Endothelial cell of umbilical vein (primary cell): ENCODE measurements at regions of chr10 and their contacts with region 1.

Region 1: GRCh38 chr10:124106241-124106879 is 13.0 kb upstream of the CHST15 start:
- DNase-seq: peak; percentile 97
- H3K4me3 ChIP-seq: no peak overlapping the region
- H3K27ac ChIP-seq: peak overlapping the region; percentile 38
- H3K4me1 ChIP-seq: peaks cover 15% of the 10 kb centered on the region
- H3K27me3 ChIP-seq: no peaks in the 10 kb centered on the region
- CTCF ChIP-seq: no peak
- POLR2A ChIP-seq: no peak

Region 2: GRCh38 chr10:124092860-124093773 is 13.2 kb before region 1 on chr10 and contains the start of gene CHST15:
- CTCF ChIA-PET with region 1: interaction called, 5 read pairs
- POLR2A ChIA-PET with region 1: no interaction called
- dilution Hi-C with region 1: no loop called
- intact Hi-C with region 1: loop called (anchors 1 kb)
- DNase-seq: peak; percentile 63
- H3K4me3 ChIP-seq: peak within 1 kb of the TSS; percentile 21 to 75 (median 25)
- H3K27ac ChIP-seq: no peak within 1 kb of the TSS
- H3K4me1 ChIP-seq: peaks cover 6% of the 10 kb centered on the region
- H3K27me3 ChIP-seq: peaks cover 4 to 47% of the 10 kb centered on the region in 2 experiments
- CTCF ChIP-seq: peak in 1 of 2 donors; percentile 29
- POLR2A ChIP-seq: no peak
- total RNA-seq, gene CHST15: 23.1 and 29.2 TPM in 2 replicates

Region 3: GRCh38 chr10:124119946-124120345 is 13.6 kb after region 1 on chr10:
- CTCF ChIA-PET with region 1: interaction called, 5 read pairs
- POLR2A ChIA-PET with region 1: interaction called, 3 read pairs
- dilution Hi-C with region 1: no loop called
- intact Hi-C with region 1: loop called (anchors 1 kb)
- DNase-seq: peak; percentile 98
- H3K4me3 ChIP-seq: no peak overlapping the region
- H3K27ac ChIP-seq: peak overlapping the region; percentile 87
- H3K4me1 ChIP-seq: peaks cover 21% of the 10 kb centered on the region
- H3K27me3 ChIP-seq: no peaks in the 10 kb centered on the region
- CTCF ChIP-seq: no peak
- POLR2A ChIP-seq: no peak